Posterior vena cava (tissue), 2 donors: ENCODE measurements at regions of chr14 and their contacts with region 1.

Region 1: DNA sequence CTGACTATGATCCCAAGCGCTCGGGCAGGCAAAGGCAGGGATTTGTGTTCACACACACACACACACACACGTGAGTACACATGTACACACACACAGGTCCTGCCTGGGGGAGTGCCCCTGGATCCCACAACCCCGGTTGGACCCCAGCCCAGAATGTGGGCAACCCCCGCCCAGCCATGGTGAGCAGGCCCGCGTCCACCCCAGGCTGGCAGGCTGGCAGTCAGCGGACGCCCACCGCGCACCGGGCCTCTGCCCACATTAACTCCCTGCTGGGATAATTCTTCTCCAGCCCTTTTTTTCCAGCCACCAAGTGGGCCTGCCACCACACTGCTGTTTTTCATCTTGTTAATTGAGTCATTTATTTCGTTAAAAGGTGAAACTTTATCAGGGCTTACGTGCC is 256.2 kb downstream of the BCL11B start:
- DNase-seq: no peak

Region 2: DNA sequence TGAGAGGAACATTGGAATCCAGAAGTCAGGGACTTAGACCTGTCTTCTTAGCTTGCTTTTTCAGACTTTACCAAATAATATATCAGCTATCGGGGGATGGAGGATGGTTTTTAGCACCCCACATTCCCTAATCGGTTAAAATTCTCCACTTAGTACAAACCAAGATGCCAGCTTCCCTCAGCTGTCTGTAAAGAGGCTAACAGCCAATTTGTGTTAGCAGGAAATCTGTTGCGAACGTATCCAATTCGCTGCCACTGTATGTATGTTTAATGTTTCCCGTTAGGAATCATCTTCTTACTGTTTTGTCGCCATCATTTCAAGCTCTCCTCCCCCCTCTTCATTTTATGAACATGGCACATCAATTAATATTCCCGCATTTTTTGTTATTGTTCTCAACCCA is 32.8 kb before region 1 on chr14:
- intact Hi-C with region 1: loop called in 1 of 2 experiments (anchors 1 kb)
- DNase-seq: no peak